ENCODE measurements at regions of chr16 and their contacts with region 1.

Region 1: GRCh38 chr16:84617791-84618580 is at the start of gene COTL1:
- DNase-seq: peak; percentile 97 to 98 (median 97)
- ATAC-seq: peak; percentile 90
- H3K4me3 ChIP-seq: peak within 1 kb of the TSS; percentile 63
- H3K4me1 ChIP-seq: peaks cover 13% of the 10 kb centered on the region
- CTCF ChIP-seq: no peak
- total RNA-seq, gene COTL1: 52.8 to 120 (median 56.8) TPM

Region 2: DNA sequence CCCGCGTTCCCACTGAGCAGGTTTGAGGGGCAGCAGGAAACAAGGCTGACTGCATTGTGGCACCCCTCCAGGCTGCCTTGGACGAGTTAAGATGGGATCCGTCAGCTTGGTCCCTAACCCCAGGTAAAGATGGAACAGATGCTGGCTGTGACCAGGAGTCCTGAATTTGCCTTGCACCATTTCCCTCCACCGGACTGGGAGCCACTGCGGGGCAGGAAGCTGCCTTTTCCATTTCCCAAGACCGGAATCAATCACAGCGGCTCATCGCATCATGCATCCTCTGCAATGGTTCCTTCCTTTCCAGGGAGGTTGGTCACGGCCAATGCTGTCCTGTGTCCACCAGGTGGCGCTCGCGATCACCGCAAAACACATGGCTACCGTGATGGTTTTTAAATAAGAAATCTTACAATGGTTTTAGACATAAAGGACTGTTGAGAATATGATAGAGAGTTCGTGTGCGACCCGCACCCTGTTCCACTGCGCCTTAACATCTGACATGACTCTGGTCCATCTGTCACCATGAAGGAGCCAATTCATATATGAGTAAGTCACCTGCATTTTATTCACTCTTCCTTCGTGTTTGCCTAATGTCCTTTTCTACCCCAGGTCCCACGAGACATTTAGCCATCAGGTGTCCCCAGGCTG is 106.7 kb before region 1 on chr16:
- intact Hi-C with region 1: loop called (anchors 5 kb)
- DNase-seq: peak; percentile 87 to 90 (median 88)
- ATAC-seq: peak; percentile 84
- H3K4me3 ChIP-seq: no peak overlapping the region
- H3K4me1 ChIP-seq: peaks cover 12% of the 10 kb centered on the region
- CTCF ChIP-seq: peak; percentile 89

Region 3: DNA sequence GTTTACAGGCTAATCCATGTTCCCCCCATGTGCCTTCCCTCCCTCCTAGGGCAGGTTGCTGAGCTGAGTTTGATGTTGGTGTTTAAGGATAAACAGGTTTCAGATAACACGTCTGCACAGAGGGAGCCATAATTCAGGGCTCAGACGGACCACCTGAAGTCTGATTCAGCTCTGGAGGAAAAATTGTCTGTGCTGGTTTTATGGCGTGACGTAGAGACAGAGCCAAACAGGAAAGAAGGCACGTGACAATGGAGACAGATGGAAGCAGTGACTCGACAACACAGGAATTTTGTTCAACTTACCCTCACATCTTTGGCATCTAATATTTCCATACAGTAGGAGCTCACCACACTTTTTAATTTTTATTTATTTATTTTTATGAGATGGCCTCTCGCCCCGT is 71.1 kb after region 1 on chr16:
- intact Hi-C with region 1: no loop called
- DNase-seq: no peak
- ATAC-seq: no peak
- H3K4me3 ChIP-seq: no peak overlapping the region
- H3K4me1 ChIP-seq: no peaks in the 10 kb centered on the region
- CTCF ChIP-seq: no peak